Activated naive CD4-positive, alpha-beta T cell treated with anti-CD3 and anti-CD28 coated beads for 36 hours (primary cell): ENCODE measurements at regions of chr2 and their contacts with region 1.

Region 1: DNA sequence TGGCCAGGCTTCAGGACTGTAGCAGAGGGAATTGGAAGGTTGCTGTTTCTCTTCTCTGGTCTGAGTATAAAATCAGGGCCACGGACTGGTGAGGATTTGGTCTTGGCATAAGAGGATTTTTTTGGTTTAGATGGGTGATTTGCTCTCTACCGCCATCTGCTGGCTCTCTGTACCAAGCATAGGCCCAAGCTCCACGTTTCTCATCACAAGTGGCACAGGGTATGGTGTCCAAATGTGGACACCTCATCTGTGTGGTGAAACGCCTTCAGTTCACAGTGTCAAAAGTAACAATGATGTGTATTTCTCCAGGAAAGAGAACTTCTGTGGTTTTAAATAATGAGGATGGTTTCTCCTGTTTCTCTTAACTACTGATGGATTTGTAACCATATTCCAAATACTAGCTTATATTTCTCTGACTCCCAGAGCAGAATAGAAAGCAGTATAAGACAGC is 115.1 kb downstream of the EML6 start:
- DNase-seq: peak; percentile 80
- H3K4me3 Mint-ChIP-seq: no peak overlapping the region
- H3K27ac Mint-ChIP-seq: no peak overlapping the region
- H3K4me1 Mint-ChIP-seq: no peaks in the 10 kb centered on the region
- H3K27me3 Mint-ChIP-seq: no peaks in the 10 kb centered on the region

Region 2: GRCh38 chr2:54106631-54107454 is 731.8 kb before region 1 on chr2:
- CTCF ChIA-PET with region 1: interaction called, 10 read pairs
- intact Hi-C with region 1: loop called (anchors 1 kb)
- DNase-seq: peak; percentile 71
- H3K4me3 Mint-ChIP-seq: no peak overlapping the region
- H3K27ac Mint-ChIP-seq: no peak overlapping the region
- H3K4me1 Mint-ChIP-seq: peaks cover 7% of the 10 kb centered on the region
- H3K27me3 Mint-ChIP-seq: no peaks in the 10 kb centered on the region

Region 3: DNA sequence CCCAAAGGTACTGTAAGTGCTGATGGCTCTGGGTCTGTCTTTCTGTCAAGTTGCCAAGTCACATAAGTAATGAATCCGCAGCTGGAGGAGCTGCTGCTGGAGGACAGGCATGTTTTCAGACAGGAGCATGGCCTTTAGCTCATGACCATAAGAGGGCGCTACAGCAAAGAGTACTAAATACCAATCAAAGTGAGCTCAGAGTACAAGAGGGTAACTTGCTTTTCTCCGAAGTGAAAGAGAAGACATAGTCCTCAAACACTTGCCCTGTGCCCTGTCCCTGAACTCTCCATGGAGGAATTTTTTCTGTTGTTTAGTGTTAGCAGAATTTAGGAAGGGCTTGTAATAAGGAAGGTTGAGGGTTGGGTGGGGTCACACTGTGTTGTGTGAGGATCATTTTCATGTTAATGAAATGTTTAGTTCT is 173.2 kb before region 1 on chr2:
- CTCF ChIA-PET with region 1: interaction called, 22 read pairs
- intact Hi-C with region 1: loop called (anchors 1 kb)
- DNase-seq: peak; percentile 73
- H3K4me3 Mint-ChIP-seq: no peak overlapping the region
- H3K27ac Mint-ChIP-seq: no peak overlapping the region
- H3K4me1 Mint-ChIP-seq: no peaks in the 10 kb centered on the region
- H3K27me3 Mint-ChIP-seq: no peaks in the 10 kb centered on the region

Region 4: DNA sequence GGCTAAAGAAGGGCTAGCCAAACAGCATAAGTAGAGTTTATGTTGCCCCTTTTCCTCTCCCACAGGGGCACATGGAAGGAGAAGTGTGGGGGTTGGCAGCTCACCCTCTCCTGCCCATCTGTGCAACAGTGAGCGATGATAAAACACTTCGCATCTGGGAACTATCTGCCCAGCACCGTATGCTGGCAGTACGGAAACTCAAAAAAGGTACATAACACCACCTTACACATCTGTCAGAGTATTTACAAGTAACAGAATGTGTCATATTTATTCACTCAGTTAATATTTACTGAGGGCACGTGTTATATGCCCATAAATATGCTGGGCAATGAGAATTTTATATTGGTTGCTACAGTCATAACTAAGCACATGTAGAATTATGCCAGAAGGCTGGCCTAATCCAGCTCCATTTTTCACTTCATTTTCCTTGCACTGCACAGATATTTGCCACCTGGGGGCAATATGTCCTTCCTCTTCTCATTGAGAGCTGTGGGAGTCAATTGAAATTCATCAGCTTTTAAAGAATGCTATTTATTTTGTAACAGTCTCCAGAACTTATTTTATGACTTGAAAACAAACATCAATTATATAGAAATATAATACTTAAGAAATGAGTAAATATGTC is 61.1 kb after region 1 on chr2:
- CTCF ChIA-PET with region 1: no interaction called
- intact Hi-C with region 1: loop called (anchors 2 kb)
- DNase-seq: no peak
- H3K4me3 Mint-ChIP-seq: no peak overlapping the region
- H3K27ac Mint-ChIP-seq: no peak overlapping the region
- H3K4me1 Mint-ChIP-seq: peaks cover 27% of the 10 kb centered on the region
- H3K27me3 Mint-ChIP-seq: no peaks in the 10 kb centered on the region

Region 5: DNA sequence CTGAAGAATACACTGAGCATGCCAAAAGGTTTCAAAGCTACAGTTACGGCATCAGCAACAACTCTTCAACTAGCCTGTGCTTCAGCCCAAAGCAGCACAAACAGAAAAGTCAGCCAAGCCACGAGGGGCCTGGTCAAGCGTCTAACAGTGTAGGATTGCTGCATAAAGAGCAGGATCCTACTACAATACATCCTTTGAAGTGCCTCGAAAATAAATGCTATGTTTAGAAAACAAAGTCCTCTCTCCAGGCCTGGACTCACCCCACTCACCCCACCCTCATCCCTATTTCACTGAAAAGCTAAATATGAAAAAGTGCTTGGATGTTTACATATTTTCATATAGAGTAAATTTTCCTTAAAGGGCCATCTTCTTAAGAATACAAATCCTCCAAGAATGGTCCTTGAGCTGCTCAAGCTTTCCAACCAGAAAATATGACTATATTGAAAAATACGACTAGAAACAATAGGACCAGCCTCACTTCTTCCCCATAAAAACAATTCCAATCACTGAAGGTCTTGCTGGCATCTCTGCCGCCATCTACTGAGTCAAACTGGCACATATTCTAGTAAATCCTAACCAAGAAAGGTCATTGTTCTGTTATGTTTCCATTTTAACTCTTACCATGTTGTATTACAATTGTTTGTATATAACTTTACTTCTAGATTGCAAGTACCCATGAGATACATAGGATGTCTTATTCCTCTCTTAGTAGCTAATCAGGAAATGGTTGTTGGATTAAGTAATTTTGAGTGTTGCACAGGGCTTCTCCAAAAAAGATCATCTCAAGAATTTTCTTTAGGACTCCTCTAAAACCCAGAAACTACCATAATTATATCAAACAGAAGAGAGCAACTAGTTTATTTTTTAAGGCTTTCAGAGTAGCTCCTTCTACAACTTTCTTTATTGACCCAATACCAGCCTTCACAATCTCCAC is 329.9 kb after region 1 on chr2:
- CTCF ChIA-PET with region 1: interaction called, 5 read pairs
- intact Hi-C with region 1: loop called (anchors 1 kb)
- DNase-seq: peak; percentile 62
- H3K4me3 Mint-ChIP-seq: no peak overlapping the region
- H3K27ac Mint-ChIP-seq: no peak overlapping the region
- H3K4me1 Mint-ChIP-seq: peaks cover 3% of the 10 kb centered on the region
- H3K27me3 Mint-ChIP-seq: no peaks in the 10 kb centered on the region